ENCODE measurements at regions of chr13 and their contacts with region 1.

Region 1: DNA sequence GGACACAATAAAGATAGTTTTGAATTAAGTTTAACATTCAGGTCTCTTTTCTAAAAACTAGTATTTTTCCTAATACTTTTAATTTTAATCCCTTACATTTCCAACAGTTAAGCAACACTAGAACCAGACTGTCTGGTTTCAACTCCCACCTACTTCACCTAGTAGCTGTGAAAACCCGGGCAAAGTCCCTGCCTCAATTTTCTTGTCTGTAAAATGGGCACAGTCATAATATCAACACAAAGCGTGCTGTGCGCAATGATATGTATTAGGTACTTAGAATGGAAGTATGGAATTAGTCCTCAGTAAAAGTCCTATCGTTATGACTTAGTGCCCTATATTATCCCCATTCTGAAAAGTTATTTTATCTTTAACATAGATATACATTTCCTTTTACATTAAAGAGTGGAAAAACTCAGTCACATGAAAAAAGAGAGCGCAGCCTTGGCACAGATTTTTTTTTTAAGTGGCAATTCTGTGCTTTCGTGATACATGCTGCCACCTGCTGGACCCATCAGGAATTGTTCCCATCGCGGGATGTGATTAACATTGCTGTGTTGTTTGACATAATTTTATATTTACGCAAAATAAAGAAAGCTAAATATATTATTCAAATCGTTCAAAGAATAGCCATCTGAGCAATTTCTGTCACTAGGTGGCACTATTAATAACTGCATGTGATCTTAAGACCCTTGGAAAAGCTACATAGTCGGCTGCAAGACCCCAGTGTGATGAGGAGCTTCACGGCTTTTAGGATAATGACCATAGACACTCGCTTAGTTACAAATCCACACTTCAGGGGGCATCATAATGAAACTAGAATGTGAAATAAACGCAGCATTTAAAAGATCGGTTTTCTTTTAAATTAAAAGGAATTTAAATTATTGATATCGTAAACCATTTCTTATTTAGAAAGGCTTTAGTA is 59.9 kb downstream of the LIG4 start:
- DNase-seq: peak; percentile 12
- H3K4me3 Mint-ChIP-seq: no peak overlapping the region
- H3K27ac Mint-ChIP-seq: no peak overlapping the region
- H3K4me1 Mint-ChIP-seq: no peaks in the 10 kb centered on the region
- H3K27me3 Mint-ChIP-seq: peaks cover 2% of the 10 kb centered on the region

Region 2: DNA sequence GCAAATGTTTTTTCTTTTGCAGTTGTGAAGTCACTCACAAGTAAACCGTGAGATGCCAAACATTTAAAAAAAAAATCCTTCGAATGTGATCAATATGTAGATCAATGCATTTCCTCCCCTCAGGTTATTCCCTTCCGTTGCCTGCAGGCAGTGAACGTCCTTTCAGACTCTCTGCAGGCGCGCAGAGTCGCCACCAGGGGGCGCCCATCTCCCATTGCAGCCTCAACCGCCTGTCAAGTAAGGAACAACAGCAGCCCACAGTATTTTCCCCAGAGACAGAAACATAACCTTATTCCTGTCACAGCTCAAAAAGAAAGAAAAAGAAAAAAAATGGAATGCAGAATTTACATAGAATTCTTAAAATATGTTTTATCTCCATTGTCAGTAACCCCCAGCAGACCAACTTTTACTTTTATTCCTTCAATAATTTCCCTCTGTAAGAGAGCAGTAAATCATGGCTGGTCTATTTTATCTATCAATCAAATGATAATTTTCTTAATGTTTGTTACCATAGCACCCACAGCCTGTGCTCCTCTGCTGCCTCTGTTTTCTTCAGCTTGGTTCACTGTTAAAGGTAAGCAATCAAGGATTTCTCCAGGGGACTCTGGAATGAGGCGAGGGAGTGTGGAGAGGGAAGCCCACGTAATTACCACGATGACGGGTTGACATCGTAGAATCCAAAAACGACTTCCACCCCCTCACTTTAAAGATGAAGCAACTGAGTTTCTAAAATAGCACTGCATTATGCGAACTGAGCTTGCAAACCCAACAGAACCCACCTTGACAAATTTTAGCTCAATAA is 949.9 kb before region 1 on chr13:
- intact Hi-C with region 1: loop called (anchors 1 kb)
- DNase-seq: peak; percentile 21
- H3K4me3 Mint-ChIP-seq: no peak overlapping the region
- H3K27ac Mint-ChIP-seq: no peak overlapping the region
- H3K4me1 Mint-ChIP-seq: no peaks in the 10 kb centered on the region
- H3K27me3 Mint-ChIP-seq: no peaks in the 10 kb centered on the region

Region 3: DNA sequence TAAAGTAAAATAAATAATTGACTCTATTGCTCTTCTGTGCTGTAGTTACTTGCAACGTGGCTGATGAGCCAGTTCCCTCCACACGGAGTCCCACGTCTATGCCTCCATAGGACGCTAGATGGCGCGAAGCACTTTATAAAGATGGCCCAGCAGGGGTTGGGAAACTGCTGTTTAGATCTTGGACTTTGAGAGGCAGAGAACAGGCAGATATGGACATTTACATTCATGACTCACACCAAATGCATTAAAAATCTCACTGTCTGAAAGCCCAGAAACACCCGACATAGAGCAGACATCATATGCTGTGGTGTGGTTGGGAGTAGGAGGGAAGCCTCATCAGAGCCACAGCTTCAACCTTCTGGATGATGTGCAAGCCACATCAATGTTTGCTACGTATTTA is 944.4 kb before region 1 on chr13:
- intact Hi-C with region 1: loop called (anchors 1 kb)
- DNase-seq: peak; percentile 11
- H3K4me3 Mint-ChIP-seq: no peak overlapping the region
- H3K27ac Mint-ChIP-seq: no peak overlapping the region
- H3K4me1 Mint-ChIP-seq: no peaks in the 10 kb centered on the region
- H3K27me3 Mint-ChIP-seq: no peaks in the 10 kb centered on the region

Region 4: GRCh38 chr13:107867701-107868661 is 287.5 kb before region 1 on chr13:
- intact Hi-C with region 1: loop called (anchors 10 kb)
- DNase-seq: no peak
- H3K4me3 Mint-ChIP-seq: no peak overlapping the region
- H3K27ac Mint-ChIP-seq: no peak overlapping the region
- H3K4me1 Mint-ChIP-seq: no peaks in the 10 kb centered on the region
- H3K27me3 Mint-ChIP-seq: peaks cover 30% of the 10 kb centered on the region

Region 5: DNA sequence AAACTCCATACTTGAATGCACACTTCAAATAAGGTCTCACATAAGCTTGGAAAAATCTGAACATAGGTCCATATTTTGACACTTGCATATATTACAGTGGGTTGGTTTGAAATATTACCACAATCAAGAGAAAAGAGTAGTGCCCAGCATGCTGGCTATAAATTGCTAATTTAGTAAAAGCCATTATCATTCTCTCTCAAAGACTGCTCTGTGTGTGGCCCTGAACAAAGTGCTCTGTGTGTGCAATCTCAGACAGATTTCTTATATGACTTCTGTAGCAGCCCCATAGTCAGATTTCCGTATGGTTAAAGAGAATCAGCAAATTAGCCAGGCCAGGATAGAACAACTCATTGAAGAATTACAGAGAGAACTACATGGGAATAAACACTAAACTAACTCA is 18.3 kb before region 1 on chr13:
- intact Hi-C with region 1: no loop called
- DNase-seq: no peak
- H3K4me3 Mint-ChIP-seq: no peak overlapping the region
- H3K27ac Mint-ChIP-seq: no peak overlapping the region
- H3K4me1 Mint-ChIP-seq: no peaks in the 10 kb centered on the region
- H3K27me3 Mint-ChIP-seq: no peaks in the 10 kb centered on the region